CD4-positive, alpha-beta T cell (primary cell): ENCODE measurements at regions of chr22 and their contacts with region 1.

Region 1: GRCh38 chr22:22348127-22348814 is 103.7 kb downstream of the VPREB1 start:
- DNase-seq: peak in 2 of 14 experiments; percentile 8 to 15
- ATAC-seq: no peak
- H3K4me3 ChIP-seq: no peak overlapping the region
- H3K4me3 Mint-ChIP-seq: no peak overlapping the region
- H3K27ac ChIP-seq: no peak overlapping the region
- H3K27ac Mint-ChIP-seq: no peak overlapping the region
- H3K4me1 ChIP-seq: no peaks in the 10 kb centered on the region
- H3K4me1 Mint-ChIP-seq: no peaks in the 10 kb centered on the region
- H3K27me3 ChIP-seq: peaks cover 7 to 9% of the 10 kb centered on the region in 2 experiments
- H3K27me3 Mint-ChIP-seq: peaks cover 17% of the 10 kb centered on the region
- CTCF ChIP-seq: no peak

Region 2: DNA sequence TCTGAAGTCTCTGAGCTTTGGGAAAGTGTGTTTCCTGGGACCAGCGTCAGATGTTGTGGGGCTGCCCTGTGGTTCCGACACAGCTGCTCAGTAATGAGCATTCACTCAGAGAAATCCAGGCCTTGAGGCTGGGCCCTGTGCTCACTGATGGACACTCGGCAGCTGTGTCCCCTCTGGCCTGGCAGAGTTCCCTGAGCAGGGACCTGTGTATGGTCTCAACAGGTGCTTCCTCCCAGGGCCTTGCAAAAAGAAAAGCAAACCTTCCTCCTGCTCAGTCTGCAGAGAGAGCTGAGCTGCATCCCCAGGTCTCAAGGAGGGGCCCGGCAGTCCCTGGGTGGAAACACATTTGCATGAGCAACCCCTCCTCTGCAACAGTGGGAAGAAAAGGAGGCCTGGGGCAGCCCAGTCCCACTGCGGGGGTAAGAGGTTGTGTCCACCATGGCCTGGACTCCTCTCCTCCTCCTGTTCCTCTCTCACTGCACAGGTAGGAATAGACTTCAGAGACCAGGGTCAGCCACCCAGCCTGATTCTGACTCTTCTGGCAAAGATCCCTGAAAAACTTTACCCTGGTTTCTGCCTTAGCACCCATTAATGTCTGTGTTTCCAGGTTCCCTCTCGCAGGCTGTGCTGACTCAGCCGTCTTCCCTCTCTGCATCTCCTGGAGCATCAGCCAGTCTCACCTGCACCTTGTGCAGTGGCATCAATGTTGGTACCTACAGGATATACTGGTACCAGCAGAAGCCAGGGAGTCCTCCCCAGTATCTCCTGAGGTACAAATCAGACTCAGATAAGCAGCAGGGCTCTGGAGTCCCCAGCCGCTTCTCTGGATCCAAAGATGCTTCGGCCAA is 27.5 kb after region 1 on chr22:
- CTCF ChIA-PET with region 1: no interaction called
- POLR2A ChIA-PET with region 1: no interaction called
- intact Hi-C with region 1: loop called (anchors 1 kb)
- DNase-seq: no peak
- ATAC-seq: no peak
- H3K4me3 ChIP-seq: no peak overlapping the region
- H3K4me3 Mint-ChIP-seq: no peak overlapping the region
- H3K27ac ChIP-seq: no peak overlapping the region
- H3K27ac Mint-ChIP-seq: no peak overlapping the region
- H3K4me1 ChIP-seq: no peaks in the 10 kb centered on the region
- H3K4me1 Mint-ChIP-seq: no peaks in the 10 kb centered on the region
- H3K27me3 ChIP-seq: peaks cover 0 to 8% of the 10 kb centered on the region in 2 experiments
- H3K27me3 Mint-ChIP-seq: peaks cover 46% of the 10 kb centered on the region
- CTCF ChIP-seq: no peak

Region 3: GRCh38 chr22:22392131-22392530 is 43.9 kb after region 1 on chr22:
- CTCF ChIA-PET with region 1: no interaction called
- POLR2A ChIA-PET with region 1: no interaction called
- intact Hi-C with region 1: loop called (anchors 1 kb)
- DNase-seq: no peak
- ATAC-seq: no peak
- H3K4me3 ChIP-seq: no peak overlapping the region
- H3K4me3 Mint-ChIP-seq: no peak overlapping the region
- H3K27ac ChIP-seq: no peak overlapping the region
- H3K27ac Mint-ChIP-seq: no peak overlapping the region
- H3K4me1 ChIP-seq: no peaks in the 10 kb centered on the region
- H3K4me1 Mint-ChIP-seq: no peaks in the 10 kb centered on the region
- H3K27me3 ChIP-seq: peaks cover 5 to 11% of the 10 kb centered on the region in 2 experiments
- H3K27me3 Mint-ChIP-seq: peaks cover 46% of the 10 kb centered on the region
- CTCF ChIP-seq: no peak

Region 4: DNA sequence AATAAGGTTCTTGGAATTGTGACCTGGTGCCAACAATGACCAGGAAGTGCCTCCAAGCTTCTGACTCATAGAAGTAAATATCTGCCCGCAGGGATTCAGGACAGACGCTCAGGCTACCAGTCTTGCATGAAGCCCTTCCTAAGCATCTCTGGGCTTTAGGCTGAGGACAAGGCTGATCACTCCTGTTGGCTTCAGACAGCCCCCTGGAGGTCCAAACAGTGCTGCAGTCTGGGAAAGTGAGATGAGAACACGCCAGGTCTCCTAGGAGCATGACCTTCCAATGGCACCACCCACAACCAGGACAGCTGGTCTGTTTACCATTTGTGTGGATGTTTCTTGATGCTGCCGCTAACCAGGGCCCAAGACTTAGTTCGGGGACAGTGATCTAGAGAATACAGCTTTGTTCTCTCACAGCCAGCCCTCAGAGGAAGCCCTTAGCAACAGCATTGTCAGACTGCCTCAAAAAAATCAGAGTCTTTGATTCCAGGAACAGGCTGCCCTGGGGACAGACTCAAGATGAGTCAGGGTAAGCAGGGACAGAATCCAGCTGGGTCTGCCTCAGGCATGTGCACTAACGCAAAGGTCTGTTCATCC is 49.1 kb after region 1 on chr22:
- CTCF ChIA-PET with region 1: no interaction called
- POLR2A ChIA-PET with region 1: no interaction called
- intact Hi-C with region 1: loop called (anchors 1 kb)
- DNase-seq: no peak
- ATAC-seq: no peak
- H3K4me3 ChIP-seq: no peak overlapping the region
- H3K4me3 Mint-ChIP-seq: no peak overlapping the region
- H3K27ac ChIP-seq: no peak overlapping the region
- H3K27ac Mint-ChIP-seq: no peak overlapping the region
- H3K4me1 ChIP-seq: no peaks in the 10 kb centered on the region
- H3K4me1 Mint-ChIP-seq: no peaks in the 10 kb centered on the region
- H3K27me3 ChIP-seq: peaks cover 4% of the 10 kb centered on the region in 2 experiments
- H3K27me3 Mint-ChIP-seq: peaks cover 19% of the 10 kb centered on the region
- CTCF ChIP-seq: no peak